Gastrocnemius medialis (tissue), 4 donors: ENCODE measurements at regions of chr10 and their contacts with region 1.

Region 1: DNA sequence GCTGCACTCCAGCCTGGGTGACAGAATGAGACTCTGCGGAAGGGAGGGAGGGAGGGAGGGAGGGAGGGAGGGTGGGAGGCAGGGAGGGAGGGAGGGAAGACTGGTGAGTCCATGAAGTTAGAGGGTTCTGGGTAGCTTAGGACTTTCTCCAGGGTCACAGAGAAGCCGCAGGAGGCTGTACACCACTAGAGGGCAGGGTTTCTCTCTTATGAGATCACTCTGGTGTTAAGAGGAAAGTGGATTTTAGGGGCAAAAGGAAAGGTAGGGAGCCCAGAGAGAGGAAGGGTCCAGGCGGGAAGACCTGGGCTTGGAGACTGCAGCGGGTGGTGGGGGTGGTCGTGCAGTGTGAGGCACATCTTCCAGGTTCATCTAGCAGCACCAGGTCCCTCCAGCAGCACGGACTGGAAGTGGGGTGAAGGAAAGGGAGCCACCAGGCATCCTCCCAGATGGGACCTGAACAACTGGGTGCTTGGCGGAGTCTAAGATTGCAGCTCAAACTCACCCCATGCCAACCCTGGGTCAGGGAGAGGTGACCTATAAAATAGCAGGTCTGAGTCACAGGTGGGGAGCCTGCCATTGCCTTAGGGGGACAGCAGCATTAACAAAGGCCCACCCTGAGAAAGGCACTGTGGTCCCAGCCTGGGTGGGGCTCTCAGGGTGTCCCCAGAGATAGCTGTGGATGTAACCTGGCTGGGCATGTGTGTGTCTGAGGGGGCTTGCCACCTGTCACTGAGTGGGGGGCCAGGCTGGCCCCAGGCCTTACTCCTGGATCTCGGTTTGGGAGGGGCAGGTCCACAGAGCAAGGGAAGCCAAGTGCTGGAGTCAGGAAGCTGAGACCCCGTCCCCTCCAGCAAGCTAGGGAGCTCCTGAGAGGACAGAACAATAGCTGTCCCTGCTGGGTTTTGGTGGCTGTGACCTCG is 48.5 kb upstream of the SLC29A3 start:
- DNase-seq: peak in 1 of 2 donors; percentile 33
- ATAC-seq: peak in 1 of 2 donors; percentile 60
- H3K4me3 ChIP-seq: no peak overlapping the region
- H3K27ac ChIP-seq: no peak overlapping the region
- H3K4me1 ChIP-seq: peaks cover 23 to 44% of the 10 kb centered on the region in 2 donors
- H3K27me3 ChIP-seq: no peaks in the 10 kb centered on the region
- CTCF ChIP-seq: peak in 3 of 5 experiments; percentile 42 to 70 (median 69)
- POLR2A ChIP-seq: no peak

Region 2: DNA sequence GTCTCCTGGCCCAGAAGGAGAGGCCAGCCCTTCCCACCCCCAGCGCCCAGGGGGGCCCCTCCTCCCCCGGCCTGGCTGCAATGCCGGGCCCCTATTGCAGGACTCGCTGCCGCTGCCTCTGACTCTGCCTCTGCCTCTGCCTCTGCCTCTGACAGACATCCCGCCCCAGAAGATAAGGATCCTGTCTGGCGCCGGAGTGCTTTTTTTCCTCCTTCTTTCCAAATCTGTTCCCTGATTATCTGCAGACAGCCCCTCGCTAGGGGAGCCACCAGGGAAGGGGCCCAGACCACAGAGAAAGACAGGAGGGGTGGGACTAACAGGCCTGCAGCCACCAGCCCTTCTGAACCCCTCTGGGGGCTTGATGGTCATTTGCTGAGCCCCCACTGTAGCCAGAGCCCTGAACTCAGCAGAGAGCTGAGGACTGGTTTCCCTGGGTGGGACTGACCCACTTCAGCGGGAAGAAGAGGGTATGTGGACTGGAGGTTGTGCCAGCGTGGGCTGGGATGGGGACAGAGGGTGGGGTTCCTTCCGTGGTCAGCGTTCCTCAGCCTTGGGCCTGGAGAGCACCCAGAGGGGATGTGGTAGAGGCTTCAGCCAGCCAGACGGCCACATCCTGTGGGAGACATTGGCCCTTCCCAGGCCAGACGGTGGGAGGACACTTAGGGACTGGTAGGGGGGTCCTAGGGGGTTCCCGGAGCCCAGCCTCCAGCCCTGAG is 35.4 kb before region 1 on chr10:
- in situ Hi-C with region 1: no loop called
- intact Hi-C with region 1: loop called (anchors 5 kb)
- DNase-seq: peak in 1 of 2 donors; percentile 33
- ATAC-seq: no peak
- H3K4me3 ChIP-seq: no peak overlapping the region
- H3K27ac ChIP-seq: no peak overlapping the region
- H3K4me1 ChIP-seq: peaks cover 45 to 52% of the 10 kb centered on the region in 2 donors
- H3K27me3 ChIP-seq: no peaks in the 10 kb centered on the region
- CTCF ChIP-seq: no peak
- POLR2A ChIP-seq: no peak

Region 3: DNA sequence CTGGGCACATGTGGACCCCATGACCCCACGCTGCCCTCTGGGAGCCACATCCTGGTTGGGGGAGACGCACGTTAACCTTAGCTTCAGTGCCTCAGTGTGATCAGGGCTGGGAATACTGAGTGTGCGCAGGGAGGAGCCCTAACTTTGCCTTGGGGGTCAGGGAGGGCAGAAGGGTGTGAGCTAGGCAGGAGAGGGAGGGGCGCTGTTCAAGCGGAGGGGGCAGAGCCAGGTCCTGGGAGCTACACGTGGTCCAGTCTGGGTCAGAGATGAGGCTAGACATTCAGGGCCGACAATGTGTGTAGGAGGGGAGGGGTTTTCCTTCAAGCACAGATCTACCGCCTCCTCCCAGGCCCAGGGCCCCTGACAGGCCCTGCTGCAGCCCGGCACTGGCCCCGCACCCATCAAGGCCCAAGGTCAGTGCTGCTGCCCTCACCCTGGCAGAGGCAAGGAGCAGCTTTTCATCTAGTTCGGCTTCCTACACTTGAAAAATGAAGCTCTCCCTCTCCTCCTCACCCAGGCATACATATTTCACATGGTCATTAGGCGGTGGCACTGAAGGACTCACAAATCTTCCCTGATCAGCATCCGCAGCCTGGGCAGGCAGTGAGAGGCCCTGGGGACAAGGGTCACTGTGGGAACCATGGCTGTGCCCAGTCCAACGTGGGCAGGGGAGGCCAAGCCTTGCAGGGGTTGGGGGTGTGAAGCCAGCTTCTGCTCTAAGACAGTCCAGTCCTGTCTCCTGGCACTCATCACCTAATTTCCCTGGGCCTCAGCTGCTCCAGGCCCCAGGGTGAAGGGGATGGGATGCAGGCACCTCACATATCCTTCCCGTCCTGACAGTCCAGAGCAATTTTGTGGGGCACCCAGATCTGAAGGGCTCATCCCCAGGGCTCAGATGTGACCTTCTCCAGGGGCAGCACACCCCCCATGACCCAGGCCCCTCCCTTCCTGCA is 401.7 kb after region 1 on chr10:
- in situ Hi-C with region 1: no loop called
- intact Hi-C with region 1: no loop called
- DNase-seq: no peak
- ATAC-seq: no peak
- H3K4me3 ChIP-seq: no peak overlapping the region
- H3K27ac ChIP-seq: no peak overlapping the region
- H3K4me1 ChIP-seq: no peaks in the 10 kb centered on the region
- H3K27me3 ChIP-seq: no peaks in the 10 kb centered on the region
- CTCF ChIP-seq: no peak
- POLR2A ChIP-seq: no peak